ENCODE measurements at regions of chr7 and their contacts with region 1.

Region 1: DNA sequence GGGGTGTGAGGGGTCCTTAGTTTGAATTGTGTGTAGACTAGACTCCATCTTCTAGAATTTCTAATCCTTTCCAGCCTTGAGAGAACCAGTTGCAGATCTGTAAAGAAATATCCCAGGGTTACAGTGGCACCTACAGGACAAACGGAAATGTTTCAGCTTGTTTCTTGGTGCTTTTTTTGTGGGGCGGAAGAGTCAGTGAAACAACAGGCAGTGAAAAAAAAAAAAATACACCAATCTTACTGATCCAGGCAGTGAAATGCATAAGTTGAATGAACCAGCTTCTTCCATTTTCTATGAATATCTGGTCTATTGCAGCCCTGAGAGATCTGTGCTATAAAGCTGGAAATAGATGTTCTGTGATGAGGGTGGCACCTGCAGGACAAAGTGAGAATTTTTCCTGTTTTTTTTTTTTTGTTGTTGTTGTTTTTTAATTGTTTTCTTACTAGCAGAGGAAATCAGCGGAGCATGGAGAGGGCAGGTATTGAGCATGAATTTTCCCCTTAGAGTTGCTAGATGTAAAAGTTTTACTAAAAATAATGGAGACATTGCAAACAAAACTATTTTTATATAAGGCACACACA is 81.9 kb upstream of the DYNC1I1 start:
- DNase-seq: peak; percentile 8
- ATAC-seq: peak; percentile 84
- H3K4me3 ChIP-seq: no peak overlapping the region
- H3K27ac ChIP-seq: no peak overlapping the region
- H3K4me1 ChIP-seq: no peaks in the 10 kb centered on the region
- H3K27me3 ChIP-seq: no peaks in the 10 kb centered on the region
- CTCF ChIP-seq: peak; percentile 26 to 44 (median 34); a peak in 5 of 6 replicates
- EP300 ChIP-seq: no peak
- POLR2A ChIP-seq: no peak
- RAD21 ChIP-seq: peak; percentile 44

Region 2: GRCh38 chr7:94449148-94449725 is 1241.2 kb before region 1 on chr7:
- CTCF ChIA-PET with region 1: interaction called, 66 read pairs
- POLR2A ChIA-PET with region 1: no interaction called
- RAD21 ChIA-PET with region 1: interaction called, 61 read pairs
- SMC1A ChIA-PET with region 1: interaction called, 33 read pairs
- in situ Hi-C with region 1: loop called (anchors 25 kb)
- intact Hi-C with region 1: loop called (anchors 5 kb)
- DNase-seq: peak; percentile 8
- ATAC-seq: peak; percentile 68
- H3K4me3 ChIP-seq: no peak overlapping the region
- H3K27ac ChIP-seq: no peak overlapping the region
- H3K4me1 ChIP-seq: no peaks in the 10 kb centered on the region
- H3K27me3 ChIP-seq: no peaks in the 10 kb centered on the region; a peak in 1 of 4 replicates
- CTCF ChIP-seq: peak; percentile 47 to 61 (median 52); a peak in 5 of 6 replicates
- EP300 ChIP-seq: no peak
- POLR2A ChIP-seq: no peak
- RAD21 ChIP-seq: peak; percentile 94

Region 3: DNA sequence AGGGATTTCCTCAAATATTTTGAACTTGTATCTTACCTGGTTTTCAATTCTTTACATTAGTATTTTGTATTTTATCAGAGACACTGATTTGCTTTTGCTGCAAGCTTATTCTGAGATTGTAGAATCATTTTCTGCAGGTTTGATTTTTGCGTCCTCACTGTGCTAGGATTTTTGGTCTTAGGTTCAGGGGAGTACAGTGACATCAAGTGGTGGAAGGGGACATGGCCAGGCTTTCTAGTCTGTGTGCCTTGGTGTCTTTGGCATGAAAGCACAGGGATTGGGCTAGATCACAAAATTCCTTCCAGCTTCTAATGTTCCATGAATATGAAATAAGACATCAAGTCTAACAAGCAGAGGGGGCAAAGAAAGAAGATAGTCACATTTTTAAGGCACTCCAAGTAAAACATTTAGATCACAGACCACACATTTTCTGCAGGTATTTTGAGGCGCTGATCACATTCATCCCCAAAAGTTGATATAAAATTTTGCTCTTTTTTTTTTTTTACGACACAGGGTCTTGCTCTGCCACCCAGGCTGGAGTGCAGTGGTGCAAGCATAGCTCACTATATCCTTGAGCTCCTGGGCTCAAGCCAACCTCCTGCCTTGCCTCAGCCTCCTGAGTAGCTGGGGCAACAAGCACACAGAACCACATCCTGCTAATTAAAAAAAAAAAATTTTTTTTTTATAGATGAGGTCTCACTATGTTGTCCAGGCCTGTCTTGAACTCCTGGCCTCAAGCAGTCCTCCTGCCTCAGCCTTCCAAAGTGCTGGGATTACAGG is 490.5 kb before region 1 on chr7:
- CTCF ChIA-PET with region 1: interaction called, 4 read pairs
- POLR2A ChIA-PET with region 1: no interaction called
- RAD21 ChIA-PET with region 1: interaction called, 7 read pairs
- SMC1A ChIA-PET with region 1: interaction called, 10 read pairs
- in situ Hi-C with region 1: no loop called
- intact Hi-C with region 1: no loop called
- DNase-seq: no peak
- ATAC-seq: peak; percentile 85
- H3K4me3 ChIP-seq: no peak overlapping the region
- H3K27ac ChIP-seq: no peak overlapping the region
- H3K4me1 ChIP-seq: no peaks in the 10 kb centered on the region
- H3K27me3 ChIP-seq: no peaks in the 10 kb centered on the region
- CTCF ChIP-seq: peak; percentile 52 to 64 (median 62)
- EP300 ChIP-seq: no peak
- POLR2A ChIP-seq: no peak
- RAD21 ChIP-seq: peak; percentile 75

Region 4: DNA sequence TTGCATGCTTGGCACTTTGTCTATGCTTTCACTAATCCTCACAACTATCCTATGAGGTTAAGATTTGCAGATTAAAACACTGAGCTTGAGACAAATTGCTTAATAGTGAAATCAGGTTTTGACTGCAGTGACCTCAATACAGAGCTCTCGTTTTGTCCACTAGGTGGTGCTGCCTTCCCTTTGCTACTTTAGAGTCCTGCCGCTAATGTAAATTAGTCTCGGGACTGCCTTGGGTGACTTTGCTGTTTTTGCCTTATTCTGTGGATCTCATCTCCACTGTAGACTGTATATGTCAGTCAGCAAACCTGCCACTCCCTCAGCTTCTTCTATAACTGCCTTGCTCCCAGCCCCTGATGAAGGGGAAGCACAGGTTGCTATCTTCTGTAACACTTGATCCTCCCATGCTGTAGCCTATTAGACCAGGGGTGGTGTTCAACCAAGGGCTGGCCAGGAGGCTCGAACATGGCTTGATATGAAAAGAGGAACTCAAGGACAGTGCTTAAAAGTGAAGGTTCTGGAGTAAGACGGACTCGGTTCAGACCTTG is 178.7 kb before region 1 on chr7:
- CTCF ChIA-PET with region 1: interaction called, 505 read pairs
- POLR2A ChIA-PET with region 1: interaction called, 5 read pairs
- RAD21 ChIA-PET with region 1: interaction called, 288 read pairs
- SMC1A ChIA-PET with region 1: interaction called, 238 read pairs
- in situ Hi-C with region 1: no loop called
- intact Hi-C with region 1: loop called (anchors 1 kb)
- DNase-seq: no peak
- ATAC-seq: peak; percentile 95
- H3K4me3 ChIP-seq: no peak overlapping the region
- H3K27ac ChIP-seq: no peak overlapping the region
- H3K4me1 ChIP-seq: no peaks in the 10 kb centered on the region
- H3K27me3 ChIP-seq: no peaks in the 10 kb centered on the region
- CTCF ChIP-seq: peak; percentile 78 to 88 (median 83)
- EP300 ChIP-seq: no peak
- POLR2A ChIP-seq: no peak
- RAD21 ChIP-seq: peak; percentile 72

Region 5: DNA sequence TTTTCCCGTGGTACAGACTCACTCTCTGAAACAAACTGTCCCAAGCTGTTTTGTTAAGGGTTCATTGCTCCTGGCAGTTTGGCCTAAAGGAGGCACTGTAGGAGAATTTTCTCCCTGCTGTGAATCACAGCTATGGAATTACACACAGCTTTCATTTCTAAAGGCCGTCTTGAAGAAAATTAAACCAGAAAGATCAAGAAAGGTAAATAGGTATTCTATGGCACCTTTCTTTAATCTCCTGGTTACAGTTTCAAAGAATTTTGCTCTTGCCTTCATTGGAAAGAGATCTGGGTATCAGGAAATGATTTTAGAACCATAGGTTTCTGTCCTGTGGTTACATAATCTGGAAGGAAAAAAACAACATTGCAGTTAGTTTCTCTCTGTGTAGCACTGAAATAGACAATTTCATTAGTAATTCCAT is 145.4 kb before region 1 on chr7:
- CTCF ChIA-PET with region 1: interaction called, 146 read pairs
- POLR2A ChIA-PET with region 1: no interaction called
- RAD21 ChIA-PET with region 1: interaction called, 81 read pairs
- SMC1A ChIA-PET with region 1: interaction called, 448 read pairs
- in situ Hi-C with region 1: no loop called
- intact Hi-C with region 1: no loop called
- DNase-seq: no peak
- ATAC-seq: peak; percentile 47; the same call in 1 of the 3 replicates
- H3K4me3 ChIP-seq: no peak overlapping the region
- H3K27ac ChIP-seq: no peak overlapping the region
- H3K4me1 ChIP-seq: no peaks in the 10 kb centered on the region
- H3K27me3 ChIP-seq: no peaks in the 10 kb centered on the region; a peak in 1 of 4 replicates
- CTCF ChIP-seq: peak; percentile 14 to 38 (median 32); a peak in 4 of 6 replicates
- EP300 ChIP-seq: no peak
- POLR2A ChIP-seq: no peak
- RAD21 ChIP-seq: peak; percentile 48

Region 6: DNA sequence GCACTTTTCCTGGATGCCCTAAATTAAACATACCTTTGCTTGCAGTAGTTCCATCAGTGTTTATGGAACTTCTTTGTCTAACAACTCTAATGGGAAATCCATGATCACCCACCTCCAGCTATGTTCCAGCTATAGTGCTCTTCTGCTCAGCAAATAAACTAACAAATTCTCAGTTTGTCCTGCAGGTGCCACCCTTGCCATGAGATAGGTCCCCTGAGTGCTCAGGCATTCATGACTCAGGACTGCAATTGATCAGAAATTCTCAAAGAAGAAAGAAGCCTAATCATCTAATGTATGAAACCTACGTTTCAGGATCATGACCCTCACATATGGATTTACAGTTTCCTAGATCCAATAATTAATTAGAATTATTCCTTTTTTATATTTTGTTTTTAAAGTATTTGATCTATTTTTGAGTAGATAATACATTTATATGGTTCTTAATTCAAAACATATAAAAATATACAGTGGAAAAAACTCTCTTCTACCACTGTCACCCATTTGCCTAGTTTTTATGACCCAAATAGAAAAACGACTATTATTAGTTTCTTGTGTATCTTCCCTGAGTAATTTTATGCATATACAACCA is 33.2 kb after region 1 on chr7:
- CTCF ChIA-PET with region 1: interaction called, 7 read pairs
- POLR2A ChIA-PET with region 1: no interaction called
- RAD21 ChIA-PET with region 1: interaction called, 13 read pairs
- SMC1A ChIA-PET with region 1: interaction called, 11 read pairs
- in situ Hi-C with region 1: no loop called
- intact Hi-C with region 1: no loop called
- DNase-seq: peak; percentile 11
- ATAC-seq: peak; percentile 86
- H3K4me3 ChIP-seq: no peak overlapping the region
- H3K27ac ChIP-seq: no peak overlapping the region
- H3K4me1 ChIP-seq: no peaks in the 10 kb centered on the region
- H3K27me3 ChIP-seq: peaks cover 0 to 2% of the 10 kb centered on the region in 2 experiments; a peak in 1 of 4 replicates
- CTCF ChIP-seq: peak in 2 of 3 experiments; percentile 36 to 67; a peak in 3 of 6 replicates
- EP300 ChIP-seq: no peak
- POLR2A ChIP-seq: no peak
- RAD21 ChIP-seq: peak; percentile 56

Region 7: DNA sequence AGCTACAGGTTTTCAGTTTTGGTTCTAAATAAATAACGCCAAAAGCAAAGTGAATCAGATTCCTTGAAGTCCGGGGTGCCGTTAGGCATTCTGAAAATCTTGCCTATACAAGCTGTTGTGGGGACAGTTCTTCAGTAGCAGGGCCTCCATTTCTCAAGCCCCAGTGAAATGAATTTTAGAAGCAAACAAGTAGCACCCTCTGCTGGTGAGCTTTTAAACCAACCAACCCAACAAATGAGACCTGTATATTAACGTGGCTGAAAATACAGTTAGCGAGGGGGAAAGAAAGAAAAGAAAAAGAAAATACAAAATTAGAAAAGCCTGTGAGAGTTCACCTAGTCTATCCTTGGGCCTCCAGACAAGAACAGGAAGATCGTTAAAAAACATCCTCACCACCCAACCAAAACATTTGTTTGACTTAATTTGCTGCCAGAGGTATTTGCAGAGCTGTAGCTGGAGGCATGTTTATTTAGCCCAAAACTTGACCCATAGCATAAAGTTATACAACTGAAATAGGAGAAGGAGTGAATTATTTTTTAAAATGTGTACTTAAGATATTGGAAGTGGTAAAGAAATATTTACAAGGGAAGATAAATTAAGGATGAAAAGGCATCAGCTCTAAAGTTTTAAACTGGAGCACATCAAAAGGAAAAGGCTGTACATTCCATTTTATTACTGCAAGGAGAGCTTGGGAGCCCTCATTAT is 180.8 kb after region 1 on chr7:
- CTCF ChIA-PET with region 1: interaction called, 47 read pairs
- POLR2A ChIA-PET with region 1: no interaction called
- RAD21 ChIA-PET with region 1: interaction called, 29 read pairs
- SMC1A ChIA-PET with region 1: interaction called, 13 read pairs
- in situ Hi-C with region 1: no loop called
- intact Hi-C with region 1: no loop called
- DNase-seq: no peak
- ATAC-seq: peak; percentile 69
- H3K4me3 ChIP-seq: no peak overlapping the region
- H3K27ac ChIP-seq: no peak overlapping the region
- H3K4me1 ChIP-seq: no peaks in the 10 kb centered on the region
- H3K27me3 ChIP-seq: no peaks in the 10 kb centered on the region
- CTCF ChIP-seq: peak; percentile 55 to 77 (median 63)
- EP300 ChIP-seq: no peak
- POLR2A ChIP-seq: no peak
- RAD21 ChIP-seq: peak; percentile 70

Region 8: GRCh38 chr7:96004578-96004977 is 314.1 kb after region 1 on chr7:
- CTCF ChIA-PET with region 1: no interaction called
- POLR2A ChIA-PET with region 1: no interaction called
- RAD21 ChIA-PET with region 1: no interaction called
- SMC1A ChIA-PET with region 1: no interaction called
- in situ Hi-C with region 1: no loop called
- intact Hi-C with region 1: no loop called
- DNase-seq: no peak
- ATAC-seq: no peak
- H3K4me3 ChIP-seq: no peak overlapping the region
- H3K27ac ChIP-seq: no peak overlapping the region
- H3K4me1 ChIP-seq: no peaks in the 10 kb centered on the region
- H3K27me3 ChIP-seq: no peaks in the 10 kb centered on the region
- CTCF ChIP-seq: no peak
- EP300 ChIP-seq: no peak
- POLR2A ChIP-seq: no peak
- RAD21 ChIP-seq: no peak

Region 9: GRCh38 chr7:96250776-96251361 is 560.4 kb after region 1 on chr7:
- CTCF ChIA-PET with region 1: no interaction called
- POLR2A ChIA-PET with region 1: no interaction called
- RAD21 ChIA-PET with region 1: no interaction called
- SMC1A ChIA-PET with region 1: no interaction called
- in situ Hi-C with region 1: no loop called
- intact Hi-C with region 1: no loop called
- DNase-seq: no peak
- ATAC-seq: no peak
- H3K4me3 ChIP-seq: no peak overlapping the region
- H3K27ac ChIP-seq: no peak overlapping the region
- H3K4me1 ChIP-seq: no peaks in the 10 kb centered on the region
- H3K27me3 ChIP-seq: no peaks in the 10 kb centered on the region
- CTCF ChIP-seq: no peak
- EP300 ChIP-seq: no peak
- POLR2A ChIP-seq: no peak
- RAD21 ChIP-seq: no peak